ENCODE measurements at regions of chr5 and their contacts with region 1.

Region 1: GRCh38 chr5:77645158-77645994 is 6.9 kb upstream of the OTP start:
- DNase-seq: peak; percentile 28
- ATAC-seq: peak; percentile 82
- H3K4me3 Mint-ChIP-seq: peak overlapping the region; percentile 25
- H3K27ac Mint-ChIP-seq: no peak overlapping the region
- H3K4me1 Mint-ChIP-seq: peaks cover 22% of the 10 kb centered on the region
- H3K27me3 Mint-ChIP-seq: peaks cover 80% of the 10 kb centered on the region
- CTCF ChIP-seq: peak; percentile 54

Region 2: GRCh38 chr5:77683171-77683732 is 37.9 kb after region 1 on chr5:
- CTCF ChIA-PET with region 1: no interaction called
- POLR2A ChIA-PET with region 1: no interaction called
- intact Hi-C with region 1: no loop called
- DNase-seq: no peak
- ATAC-seq: no peak
- H3K4me3 Mint-ChIP-seq: no peak overlapping the region
- H3K27ac Mint-ChIP-seq: no peak overlapping the region
- H3K4me1 Mint-ChIP-seq: no peaks in the 10 kb centered on the region
- H3K27me3 Mint-ChIP-seq: peaks cover 12% of the 10 kb centered on the region
- CTCF ChIP-seq: no peak

Region 3: GRCh38 chr5:77697692-77698091 is 52.3 kb after region 1 on chr5:
- CTCF ChIA-PET with region 1: no interaction called
- POLR2A ChIA-PET with region 1: no interaction called
- intact Hi-C with region 1: no loop called
- DNase-seq: no peak
- ATAC-seq: no peak
- H3K4me3 Mint-ChIP-seq: no peak overlapping the region
- H3K27ac Mint-ChIP-seq: no peak overlapping the region
- H3K4me1 Mint-ChIP-seq: peaks cover 29% of the 10 kb centered on the region
- H3K27me3 Mint-ChIP-seq: no peaks in the 10 kb centered on the region
- CTCF ChIP-seq: no peak

Region 4: GRCh38 chr5:77844623-77845323 is 199.4 kb after region 1 on chr5:
- CTCF ChIA-PET with region 1: interaction called, 3 read pairs
- POLR2A ChIA-PET with region 1: no interaction called
- intact Hi-C with region 1: loop called (anchors 10 kb)
- DNase-seq: no peak
- ATAC-seq: no peak
- H3K4me3 Mint-ChIP-seq: peak overlapping the region; percentile 55
- H3K27ac Mint-ChIP-seq: no peak overlapping the region
- H3K4me1 Mint-ChIP-seq: peaks cover 8% of the 10 kb centered on the region
- H3K27me3 Mint-ChIP-seq: peaks cover 42% of the 10 kb centered on the region
- CTCF ChIP-seq: no peak

Measured in activated CD8-positive, alpha-beta T cell treated with anti-CD3 and anti-CD28 coated beads for 36 hours (primary cell).